Dorsolateral prefrontal cortex (tissue), 120 donors: ENCODE measurements at regions of chr19 and their contacts with region 1.

Region 1: GRCh38 chr19:45523642-45524256 is 16.5 kb downstream of the VASP start:
- DNase-seq: peak; percentile 64 to 88 (median 79)
- H3K4me3 ChIP-seq: no peak overlapping the region
- H3K27ac ChIP-seq: peak overlapping the region in 35 of 59 donors; percentile 3 to 81 (median 44)
- H3K27me3 ChIP-seq: no peaks in the 10 kb centered on the region
- CTCF ChIP-seq: peak; percentile 87 to 96 (median 92)

Region 2: GRCh38 chr19:45264781-45265317 is 258.9 kb before region 1 on chr19:
- intact Hi-C with region 1: no loop called
- DNase-seq: no peak
- H3K4me3 ChIP-seq: no peak overlapping the region
- H3K27ac ChIP-seq: no peak overlapping the region
- H3K27me3 ChIP-seq: no peaks in the 10 kb centered on the region
- CTCF ChIP-seq: no peak

Region 3: GRCh38 chr19:45558399-45558878 is 34.7 kb after region 1 on chr19:
- intact Hi-C with region 1: loop called (anchors 1 to 5 kb)
- DNase-seq: peak in 6 of 10 donors; percentile 30 to 68 (median 48)
- H3K4me3 ChIP-seq: peak overlapping the region in 14 of 59 donors; percentile 7 to 35 (median 20)
- H3K27ac ChIP-seq: no peak overlapping the region
- H3K27me3 ChIP-seq: no peaks in the 10 kb centered on the region
- CTCF ChIP-seq: peak; percentile 39 to 79 (median 64)

Region 4: DNA sequence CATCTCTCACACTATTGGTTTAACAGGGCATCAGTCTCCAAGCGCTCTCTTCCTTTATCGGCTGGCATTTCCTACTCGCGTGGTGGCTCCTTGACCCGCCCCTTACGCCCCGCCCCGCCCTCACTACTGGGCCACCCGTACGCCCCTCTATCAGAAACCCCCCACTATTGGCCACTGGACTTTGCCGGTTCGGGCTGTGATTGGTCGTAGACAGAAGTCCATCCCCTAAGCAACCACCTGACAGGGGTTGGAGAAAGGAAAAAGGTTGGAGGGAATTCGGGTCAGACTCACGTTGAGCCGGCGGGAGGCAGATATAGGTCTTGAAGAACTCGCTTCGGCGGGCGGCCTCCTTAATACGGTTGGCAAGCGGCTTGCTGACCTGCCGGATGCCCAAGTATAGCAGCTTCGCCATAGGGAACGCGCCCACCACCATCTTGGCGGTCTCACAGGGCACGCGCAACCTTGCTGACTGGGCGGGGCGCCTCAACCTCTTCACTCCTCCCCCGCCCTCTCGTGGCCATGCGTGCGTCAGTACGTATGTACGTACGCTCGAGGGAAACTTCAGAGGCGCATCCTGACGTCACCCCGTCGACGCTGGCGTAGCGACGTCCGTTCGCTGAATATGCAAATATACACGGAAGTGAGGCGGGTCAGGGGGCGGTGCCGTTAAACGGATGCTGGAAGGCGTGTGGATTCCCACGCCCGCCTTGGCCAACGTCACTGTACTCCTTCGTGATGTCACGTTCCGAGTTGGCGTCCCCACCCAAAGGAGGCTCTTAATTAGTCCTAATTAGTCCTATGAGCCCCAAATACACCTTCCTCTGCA is 60.8 kb after region 1 on chr19 and contains the start of gene OPA3:
- intact Hi-C with region 1: loop called (anchors 10 kb)
- DNase-seq: peak; percentile 100
- H3K4me3 ChIP-seq: peak within 1 kb of the TSS; percentile 56 to 96 (median 83)
- H3K27ac ChIP-seq: peak within 1 kb of the TSS; percentile 92 to 100 (median 98)
- H3K27me3 ChIP-seq: no peaks in the 10 kb centered on the region
- CTCF ChIP-seq: peak in 25 of 56 donors; percentile 4 to 57 (median 22)
- total RNA-seq, gene OPA3: 7.1 to 16.8 (median 11.5) TPM

Region 5: GRCh38 chr19:45681391-45682015 is 157.8 kb after region 1 on chr19:
- intact Hi-C with region 1: loop called in 1 of 2 experiments (anchors 5 kb)
- DNase-seq: peak; percentile 82 to 93 (median 88)
- H3K4me3 ChIP-seq: peak overlapping the region; percentile 23 to 70 (median 52)
- H3K27ac ChIP-seq: peak overlapping the region; percentile 75 to 100 (median 97)
- H3K27me3 ChIP-seq: peaks cover 0 to 38% (median 21%) of the 10 kb centered on the region in 45 donors
- CTCF ChIP-seq: peak; percentile 75 to 99 (median 96)

Region 6: DNA sequence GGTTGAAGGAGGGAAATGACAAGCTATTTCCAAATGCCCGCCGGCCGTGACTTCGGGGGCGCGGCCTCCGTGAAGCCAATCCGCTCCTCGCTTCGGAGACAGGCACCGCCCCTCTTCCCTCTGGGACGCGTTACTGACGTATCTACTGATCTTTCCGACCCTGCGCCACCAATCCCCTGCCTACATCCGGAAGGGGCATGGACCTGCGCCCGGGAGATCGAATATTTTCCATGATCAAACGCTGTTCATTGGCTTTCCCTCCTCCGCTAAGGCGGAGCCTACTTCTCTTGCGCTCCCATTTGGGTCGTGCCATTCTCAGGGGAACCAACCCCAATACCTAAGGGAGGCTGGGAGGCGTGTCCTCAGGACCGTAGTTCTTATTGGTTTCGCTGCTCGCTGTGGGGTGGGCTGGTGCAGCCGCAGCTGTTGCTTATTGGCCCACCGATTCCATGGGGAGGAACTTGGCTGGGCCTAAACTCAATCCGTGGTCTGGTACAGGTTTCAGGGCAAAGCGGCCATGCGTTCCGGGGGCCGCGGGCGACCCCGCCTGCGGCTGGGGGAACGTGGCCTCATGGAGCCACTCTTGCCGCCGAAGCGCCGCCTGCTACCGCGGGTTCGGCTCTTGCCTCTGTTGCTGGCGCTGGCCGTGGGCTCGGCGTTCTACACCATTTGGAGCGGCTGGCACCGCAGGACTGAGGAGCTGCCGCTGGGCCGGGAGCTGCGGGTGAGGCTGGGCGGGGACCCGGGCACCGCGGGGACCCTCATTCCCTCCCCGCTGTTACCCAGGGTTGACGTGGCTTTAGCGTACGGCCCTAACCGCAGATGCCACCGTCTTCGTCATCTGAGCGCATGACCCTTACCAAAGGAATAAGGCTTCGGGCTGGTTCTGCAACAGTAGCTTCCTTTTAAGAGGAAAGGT is 168.7 kb after region 1 on chr19 and contains the start of gene QPCTL:
- intact Hi-C with region 1: loop called (anchors 5 kb)
- DNase-seq: peak; percentile 90 to 99 (median 98)
- H3K4me3 ChIP-seq: peak within 1 kb of the TSS; percentile 68 to 100 (median 90)
- H3K27ac ChIP-seq: peak within 1 kb of the TSS; percentile 25 to 96 (median 84)
- H3K27me3 ChIP-seq: no peaks in the 10 kb centered on the region
- CTCF ChIP-seq: peak in 13 of 56 donors; percentile 0 to 58 (median 23)
- total RNA-seq, gene QPCTL: 3.0 to 16.5 (median 8.6) TPM

Region 7: DNA sequence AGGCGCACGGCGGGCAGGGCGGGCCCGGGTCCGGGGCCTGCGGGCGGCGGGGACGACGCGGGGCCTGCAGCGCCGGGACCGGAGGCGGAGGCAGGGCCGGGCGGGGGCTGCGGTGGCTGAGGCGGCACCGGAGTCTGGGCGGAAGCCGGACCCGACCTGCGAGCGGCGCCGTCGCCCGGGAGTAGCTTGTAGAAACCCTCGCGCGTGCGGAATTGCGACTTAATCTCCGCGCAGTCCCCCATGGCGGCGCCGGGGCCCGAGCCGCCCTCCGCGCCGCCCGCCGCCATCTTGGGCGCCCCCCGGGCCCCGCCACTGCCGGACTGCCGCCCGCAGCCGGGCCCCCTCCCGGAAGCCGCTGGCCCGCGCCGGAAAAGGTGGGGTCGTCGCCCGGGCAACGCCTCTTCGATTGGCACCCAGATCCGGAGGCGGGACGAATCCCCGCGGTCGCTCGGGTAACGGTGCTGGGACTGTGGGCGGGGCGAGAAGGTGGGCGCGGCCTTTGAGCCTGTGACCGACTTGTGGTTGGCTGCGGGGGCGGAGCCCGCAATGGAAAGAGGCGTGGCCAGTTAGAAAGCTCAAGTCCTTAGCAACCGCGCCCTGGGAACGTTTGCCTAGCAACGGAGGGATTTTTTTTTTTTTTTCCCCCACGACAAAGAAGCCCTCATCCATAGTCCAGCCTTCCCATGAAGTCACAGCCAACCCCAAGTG is 268.9 kb after region 1 on chr19 and contains the start of gene DMWD:
- intact Hi-C with region 1: loop called in 1 of 2 experiments (anchors 10 kb)
- DNase-seq: peak; percentile 99 to 100 (median 100)
- H3K4me3 ChIP-seq: peak within 1 kb of the TSS; percentile 55 to 87 (median 72)
- H3K27ac ChIP-seq: peak within 1 kb of the TSS in 44 of 59 donors; percentile 4 to 86 (median 66)
- H3K27me3 ChIP-seq: no peaks in the 10 kb centered on the region
- CTCF ChIP-seq: peak in 9 of 56 donors; percentile 7 to 46 (median 22)
- total RNA-seq, gene DMWD: 58.7 to 138 (median 86.8) TPM